Transverse colon (tissue), 4 donors: ENCODE measurements at regions of chr2 and their contacts with region 1.

Region 1: DNA sequence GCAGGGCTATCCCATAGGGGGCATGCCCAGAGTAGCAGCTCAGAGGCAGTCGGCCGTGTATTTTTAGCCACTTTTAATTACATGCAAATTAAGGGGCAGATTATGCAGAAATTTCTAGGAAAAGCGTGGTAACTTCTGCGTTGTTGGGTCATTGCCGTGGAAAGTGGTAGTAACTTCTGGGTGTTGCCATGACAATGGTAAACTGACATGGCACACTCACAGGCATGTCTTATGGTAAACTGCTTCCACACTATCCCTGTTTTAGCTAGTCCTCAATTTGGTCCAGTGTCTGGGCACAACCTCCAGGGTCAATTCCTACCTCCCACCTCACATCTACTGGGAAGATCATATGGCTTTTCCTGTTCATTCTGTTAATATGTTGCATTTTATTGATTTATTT is 428.9 kb upstream of the FANCL start:
- DNase-seq: no peak
- H3K4me3 ChIP-seq: no peak overlapping the region
- H3K27ac ChIP-seq: no peak overlapping the region
- H3K4me1 ChIP-seq: no peaks in the 10 kb centered on the region
- H3K27me3 ChIP-seq: no peaks in the 10 kb centered on the region
- CTCF ChIP-seq: no peak
- EP300 ChIP-seq: no peak
- POLR2A ChIP-seq: no peak

Region 2: GRCh38 chr2:58501371-58502160 is 168.4 kb before region 1 on chr2:
- in situ Hi-C with region 1: no loop called
- intact Hi-C with region 1: no loop called
- DNase-seq: no peak
- H3K4me3 ChIP-seq: no peak overlapping the region
- H3K27ac ChIP-seq: no peak overlapping the region
- H3K4me1 ChIP-seq: no peaks in the 10 kb centered on the region
- H3K27me3 ChIP-seq: no peaks in the 10 kb centered on the region
- CTCF ChIP-seq: no peak
- EP300 ChIP-seq: no peak
- POLR2A ChIP-seq: no peak

Region 3: GRCh38 chr2:58708565-58708964 is 38.6 kb after region 1 on chr2:
- in situ Hi-C with region 1: no loop called
- intact Hi-C with region 1: loop called (anchors 2 kb)
- DNase-seq: no peak
- H3K4me3 ChIP-seq: no peak overlapping the region
- H3K27ac ChIP-seq: no peak overlapping the region
- H3K4me1 ChIP-seq: no peaks in the 10 kb centered on the region
- H3K27me3 ChIP-seq: no peaks in the 10 kb centered on the region
- CTCF ChIP-seq: no peak
- EP300 ChIP-seq: no peak
- POLR2A ChIP-seq: no peak

Region 4: GRCh38 chr2:58739033-58739432 is 69.0 kb after region 1 on chr2:
- in situ Hi-C with region 1: no loop called
- intact Hi-C with region 1: no loop called
- DNase-seq: no peak
- H3K4me3 ChIP-seq: no peak overlapping the region
- H3K27ac ChIP-seq: no peak overlapping the region
- H3K4me1 ChIP-seq: no peaks in the 10 kb centered on the region
- H3K27me3 ChIP-seq: no peaks in the 10 kb centered on the region
- CTCF ChIP-seq: no peak
- EP300 ChIP-seq: no peak
- POLR2A ChIP-seq: no peak

Region 5: GRCh38 chr2:59322005-59322404 is 652.0 kb after region 1 on chr2:
- in situ Hi-C with region 1: no loop called
- intact Hi-C with region 1: no loop called
- DNase-seq: no peak
- H3K4me3 ChIP-seq: no peak overlapping the region
- H3K27ac ChIP-seq: no peak overlapping the region
- H3K4me1 ChIP-seq: no peaks in the 10 kb centered on the region
- H3K27me3 ChIP-seq: no peaks in the 10 kb centered on the region
- CTCF ChIP-seq: no peak
- EP300 ChIP-seq: no peak
- POLR2A ChIP-seq: no peak